CD8-positive, alpha-beta T cell (primary cell): ENCODE measurements at regions of chr17 and their contacts with region 1.

Region 1: DNA sequence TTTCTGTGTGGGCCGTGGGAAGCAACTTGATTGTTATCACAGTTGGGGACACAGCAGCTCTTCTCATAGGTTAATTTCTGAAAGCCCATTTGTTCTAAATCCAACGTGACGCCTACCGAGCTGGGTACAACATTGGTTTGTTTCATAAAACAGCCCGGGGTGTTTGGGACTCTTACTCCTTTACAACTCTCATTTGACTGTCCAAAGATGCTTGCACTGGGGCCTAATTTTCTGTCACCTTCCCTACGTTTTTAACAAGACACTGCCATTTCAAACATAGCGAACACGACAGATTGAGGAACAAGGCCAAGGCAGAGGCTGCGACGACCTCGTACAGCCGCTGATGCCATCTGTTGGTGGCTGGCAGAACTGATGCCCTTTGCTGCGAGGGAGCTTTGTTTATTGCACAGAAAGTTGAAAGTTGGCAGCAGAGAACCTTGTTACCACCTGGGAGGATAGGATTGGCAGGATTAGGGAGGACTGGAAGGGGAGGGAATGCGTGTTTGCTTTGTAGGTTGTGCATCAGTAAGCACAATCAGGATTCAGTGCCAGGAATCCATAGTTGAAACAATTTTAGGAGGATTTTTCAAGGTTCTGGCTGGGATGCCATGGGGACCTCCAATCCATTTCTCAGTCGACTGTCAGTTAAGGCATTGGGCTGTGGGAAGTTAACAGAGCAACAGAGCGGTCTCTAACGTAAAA is 98.3 kb downstream of the PITPNC1 start:
- DNase-seq: peak; percentile 76 to 94 (median 87)
- ATAC-seq: peak; percentile 77
- H3K4me3 ChIP-seq: peak overlapping the region; percentile 18 to 27
- H3K4me3 Mint-ChIP-seq: peak overlapping the region; percentile 73
- H3K27ac ChIP-seq: peak overlapping the region; percentile 47 to 81
- H3K27ac Mint-ChIP-seq: peak overlapping the region; percentile 95
- H3K4me1 ChIP-seq: peaks cover 72% of the 10 kb centered on the region
- H3K4me1 Mint-ChIP-seq: peaks cover 72% of the 10 kb centered on the region
- H3K27me3 ChIP-seq: no peaks in the 10 kb centered on the region
- H3K27me3 Mint-ChIP-seq: no peaks in the 10 kb centered on the region
- CTCF ChIP-seq: peak; percentile 95

Region 2: GRCh38 chr17:67390646-67391384 is 84.6 kb before region 1 on chr17:
- CTCF ChIA-PET with region 1: interaction called, 502 read pairs
- POLR2A ChIA-PET with region 1: interaction called, 7 read pairs
- intact Hi-C with region 1: loop called (anchors 1 to 2 kb)
- DNase-seq: peak; percentile 21 to 84 (median 67)
- ATAC-seq: peak; percentile 74
- H3K4me3 ChIP-seq: peak overlapping the region; percentile 7 to 30
- H3K4me3 Mint-ChIP-seq: peak overlapping the region; percentile 59
- H3K27ac ChIP-seq: peak overlapping the region; percentile 62 to 74
- H3K27ac Mint-ChIP-seq: peak overlapping the region; percentile 91
- H3K4me1 ChIP-seq: peaks cover 67% of the 10 kb centered on the region
- H3K4me1 Mint-ChIP-seq: peaks cover 86% of the 10 kb centered on the region
- H3K27me3 ChIP-seq: no peaks in the 10 kb centered on the region
- H3K27me3 Mint-ChIP-seq: no peaks in the 10 kb centered on the region
- CTCF ChIP-seq: no peak

Region 3: DNA sequence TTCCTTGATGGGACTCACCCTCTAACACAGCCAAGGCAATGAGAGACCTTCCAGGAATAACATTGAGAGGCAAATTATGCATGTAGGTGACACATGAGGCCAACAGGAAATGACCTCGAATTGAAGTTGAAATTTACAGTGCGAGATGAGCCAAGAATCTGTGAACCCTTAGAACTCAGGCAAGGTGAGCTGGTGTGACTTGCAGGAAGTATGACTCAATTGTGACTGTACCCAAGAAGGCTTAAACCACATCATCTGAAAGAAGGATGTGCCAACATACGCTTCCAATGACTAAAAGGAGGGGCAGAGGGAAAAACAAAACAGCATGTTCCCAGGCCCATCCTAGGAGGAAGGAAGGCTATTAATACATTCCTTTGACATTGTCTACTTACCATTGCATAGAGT is 53.5 kb before region 1 on chr17:
- CTCF ChIA-PET with region 1: interaction called, 15 read pairs
- POLR2A ChIA-PET with region 1: interaction called, 15 read pairs
- intact Hi-C with region 1: loop called (anchors 1 to 2 kb)
- DNase-seq: peak in 7 of 9 experiments; percentile 53 to 95 (median 69)
- ATAC-seq: peak; percentile 87
- H3K4me3 ChIP-seq: no peak overlapping the region
- H3K4me3 Mint-ChIP-seq: peak overlapping the region; percentile 35
- H3K27ac ChIP-seq: peak overlapping the region; percentile 50 to 96
- H3K27ac Mint-ChIP-seq: peak overlapping the region; percentile 96
- H3K4me1 ChIP-seq: peaks cover 70% of the 10 kb centered on the region
- H3K4me1 Mint-ChIP-seq: peaks cover 90% of the 10 kb centered on the region
- H3K27me3 ChIP-seq: no peaks in the 10 kb centered on the region
- H3K27me3 Mint-ChIP-seq: no peaks in the 10 kb centered on the region
- CTCF ChIP-seq: no peak

Region 4: DNA sequence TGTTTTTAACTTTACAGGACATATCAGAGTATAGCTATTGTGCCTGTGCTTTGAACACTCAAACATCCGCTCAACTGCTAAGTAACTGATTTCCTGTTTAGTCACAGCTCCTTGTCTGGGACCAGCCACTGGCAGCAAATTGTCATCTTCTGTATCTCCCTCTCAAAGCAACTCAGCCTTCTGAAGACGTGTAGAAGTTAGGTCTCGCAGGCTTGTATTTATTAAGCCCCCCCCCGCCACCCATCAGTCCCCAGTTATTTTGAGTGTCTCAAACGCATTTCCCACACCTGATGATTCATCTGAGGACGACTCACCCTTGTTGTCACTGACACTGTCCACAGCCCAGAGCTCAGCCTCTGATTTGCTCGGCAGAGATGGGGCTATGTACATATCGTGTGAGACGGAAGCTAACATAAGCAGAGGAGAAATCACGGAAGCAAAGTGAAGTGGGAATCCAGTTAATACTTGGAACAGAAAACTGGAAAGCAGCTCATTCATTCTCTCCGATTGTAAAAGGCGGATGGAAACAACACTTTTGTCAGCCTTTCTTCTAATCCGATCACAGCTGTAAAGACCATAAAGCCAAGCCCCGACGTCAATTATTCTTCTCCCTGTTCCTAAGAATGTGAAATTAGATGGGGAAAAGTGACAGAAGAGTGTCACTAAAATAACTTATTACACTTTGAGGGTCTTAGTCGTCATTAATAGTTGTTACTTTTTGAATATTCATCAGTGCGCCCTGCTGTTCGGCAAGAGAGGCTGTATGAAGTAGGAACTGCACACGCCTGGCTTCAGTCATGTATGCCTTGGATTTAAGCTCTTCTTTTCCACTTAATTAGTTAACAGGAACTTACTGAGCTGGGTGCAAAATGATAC is 34.1 kb before region 1 on chr17:
- CTCF ChIA-PET with region 1: interaction called, 84 read pairs
- POLR2A ChIA-PET with region 1: interaction called, 43 read pairs
- intact Hi-C with region 1: loop called (anchors 1 to 2 kb)
- DNase-seq: peak; percentile 61 to 95 (median 79)
- ATAC-seq: peak; percentile 82
- H3K4me3 ChIP-seq: peak overlapping the region; percentile 38 to 47
- H3K4me3 Mint-ChIP-seq: peak overlapping the region; percentile 71
- H3K27ac ChIP-seq: peak overlapping the region; percentile 84 to 98
- H3K27ac Mint-ChIP-seq: peak overlapping the region; percentile 95
- H3K4me1 ChIP-seq: peaks cover 86% of the 10 kb centered on the region
- H3K4me1 Mint-ChIP-seq: peaks cover 83% of the 10 kb centered on the region
- H3K27me3 ChIP-seq: no peaks in the 10 kb centered on the region
- H3K27me3 Mint-ChIP-seq: no peaks in the 10 kb centered on the region
- CTCF ChIP-seq: no peak

Region 5: GRCh38 chr17:67459870-67460455 is 15.4 kb before region 1 on chr17:
- CTCF ChIA-PET with region 1: interaction called, 84 read pairs
- POLR2A ChIA-PET with region 1: interaction called, 26 read pairs
- intact Hi-C with region 1: loop called in 1 of 2 experiments (anchors 2 kb)
- DNase-seq: peak in 1 of 9 experiments; percentile 39
- ATAC-seq: no peak
- H3K4me3 ChIP-seq: no peak overlapping the region
- H3K4me3 Mint-ChIP-seq: no peak overlapping the region
- H3K27ac ChIP-seq: peak overlapping the region in 1 of 2 experiments; percentile 20
- H3K27ac Mint-ChIP-seq: peak overlapping the region; percentile 80
- H3K4me1 ChIP-seq: peaks cover 60% of the 10 kb centered on the region
- H3K4me1 Mint-ChIP-seq: peaks cover 79% of the 10 kb centered on the region
- H3K27me3 ChIP-seq: no peaks in the 10 kb centered on the region
- H3K27me3 Mint-ChIP-seq: no peaks in the 10 kb centered on the region
- CTCF ChIP-seq: no peak

Region 6: GRCh38 chr17:67602956-67603355 is 127.6 kb after region 1 on chr17:
- CTCF ChIA-PET with region 1: interaction called, 11 read pairs
- POLR2A ChIA-PET with region 1: interaction called, 3 read pairs
- intact Hi-C with region 1: loop called (anchors 2 to 5 kb)
- DNase-seq: peak; percentile 8 to 73 (median 51)
- ATAC-seq: peak; percentile 97
- H3K4me3 ChIP-seq: no peak overlapping the region
- H3K4me3 Mint-ChIP-seq: no peak overlapping the region
- H3K27ac ChIP-seq: no peak overlapping the region
- H3K27ac Mint-ChIP-seq: peak overlapping the region; percentile 29
- H3K4me1 ChIP-seq: no peaks in the 10 kb centered on the region
- H3K4me1 Mint-ChIP-seq: peaks cover 34% of the 10 kb centered on the region
- H3K27me3 ChIP-seq: no peaks in the 10 kb centered on the region
- H3K27me3 Mint-ChIP-seq: no peaks in the 10 kb centered on the region
- CTCF ChIP-seq: peak; percentile 52

Region 7: GRCh38 chr17:67689534-67690177 is 214.3 kb after region 1 on chr17:
- CTCF ChIA-PET with region 1: interaction called, 13 read pairs
- POLR2A ChIA-PET with region 1: interaction called, 3 read pairs
- intact Hi-C with region 1: loop called in 1 of 2 experiments (anchors 5 kb)
- DNase-seq: peak in 7 of 9 experiments; percentile 18 to 77 (median 39)
- ATAC-seq: peak; percentile 73
- H3K4me3 ChIP-seq: no peak overlapping the region
- H3K4me3 Mint-ChIP-seq: no peak overlapping the region
- H3K27ac ChIP-seq: no peak overlapping the region
- H3K27ac Mint-ChIP-seq: no peak overlapping the region
- H3K4me1 ChIP-seq: no peaks in the 10 kb centered on the region
- H3K4me1 Mint-ChIP-seq: peaks cover 4% of the 10 kb centered on the region
- H3K27me3 ChIP-seq: no peaks in the 10 kb centered on the region
- H3K27me3 Mint-ChIP-seq: no peaks in the 10 kb centered on the region
- CTCF ChIP-seq: peak; percentile 93